CD8-positive, alpha-beta memory T cell (primary cell): ENCODE measurements at regions of chr1 and their contacts with region 1.

Region 1: GRCh38 chr1:159891275-159892157 is 8.4 kb downstream of the CFAP45 start:
- DNase-seq: peak; percentile 66 to 88 (median 73)
- H3K4me3 ChIP-seq: no peak overlapping the region
- H3K4me3 Mint-ChIP-seq: peak overlapping the region in 1 of 7 donors; percentile 67
- H3K27ac ChIP-seq: no peak overlapping the region
- H3K27ac Mint-ChIP-seq: peak overlapping the region in 4 of 8 donors; percentile 37 to 74 (median 50)
- H3K4me1 ChIP-seq: peaks cover 17% of the 10 kb centered on the region
- H3K4me1 Mint-ChIP-seq: peaks cover 24 to 26% (median 25%) of the 10 kb centered on the region in 3 donors
- H3K27me3 ChIP-seq: no peaks in the 10 kb centered on the region
- H3K27me3 Mint-ChIP-seq: no peaks in the 10 kb centered on the region

Region 2: GRCh38 chr1:159780583-159781582 is 110.6 kb before region 1 on chr1 and contains the start of gene DUSP23:
- CTCF ChIA-PET with region 1: interaction called, 66 read pairs
- POLR2A ChIA-PET with region 1: no interaction called
- DNase-seq: peak; percentile 94 to 96 (median 96)
- H3K4me3 ChIP-seq: peak within 1 kb of the TSS; percentile 63
- H3K4me3 Mint-ChIP-seq: peak within 1 kb of the TSS; percentile 81 to 95 (median 89)
- H3K27ac ChIP-seq: peak within 1 kb of the TSS; percentile 58
- H3K27ac Mint-ChIP-seq: peak within 1 kb of the TSS; percentile 8 to 92 (median 88)
- H3K4me1 ChIP-seq: peaks cover 9% of the 10 kb centered on the region
- H3K4me1 Mint-ChIP-seq: peaks cover 39 to 57% (median 43%) of the 10 kb centered on the region in 3 donors
- H3K27me3 ChIP-seq: no peaks in the 10 kb centered on the region
- H3K27me3 Mint-ChIP-seq: peaks cover 0 to 1% of the 10 kb centered on the region in 2 donors
- total RNA-seq, gene DUSP23: 35.5 to 38.1 TPM

Region 3: GRCh38 chr1:159790237-159790917 is 101.1 kb before region 1 on chr1:
- CTCF ChIA-PET with region 1: interaction called, 316 read pairs
- POLR2A ChIA-PET with region 1: no interaction called
- DNase-seq: peak in 1 of 5 donors; percentile 20
- H3K4me3 ChIP-seq: no peak overlapping the region
- H3K4me3 Mint-ChIP-seq: no peak overlapping the region
- H3K27ac ChIP-seq: no peak overlapping the region
- H3K27ac Mint-ChIP-seq: no peak overlapping the region
- H3K4me1 ChIP-seq: no peaks in the 10 kb centered on the region
- H3K4me1 Mint-ChIP-seq: peaks cover 0 to 4% (median 0%) of the 10 kb centered on the region in 3 donors
- H3K27me3 ChIP-seq: no peaks in the 10 kb centered on the region
- H3K27me3 Mint-ChIP-seq: peaks cover 5 to 9% of the 10 kb centered on the region in 2 donors

Region 4: DNA sequence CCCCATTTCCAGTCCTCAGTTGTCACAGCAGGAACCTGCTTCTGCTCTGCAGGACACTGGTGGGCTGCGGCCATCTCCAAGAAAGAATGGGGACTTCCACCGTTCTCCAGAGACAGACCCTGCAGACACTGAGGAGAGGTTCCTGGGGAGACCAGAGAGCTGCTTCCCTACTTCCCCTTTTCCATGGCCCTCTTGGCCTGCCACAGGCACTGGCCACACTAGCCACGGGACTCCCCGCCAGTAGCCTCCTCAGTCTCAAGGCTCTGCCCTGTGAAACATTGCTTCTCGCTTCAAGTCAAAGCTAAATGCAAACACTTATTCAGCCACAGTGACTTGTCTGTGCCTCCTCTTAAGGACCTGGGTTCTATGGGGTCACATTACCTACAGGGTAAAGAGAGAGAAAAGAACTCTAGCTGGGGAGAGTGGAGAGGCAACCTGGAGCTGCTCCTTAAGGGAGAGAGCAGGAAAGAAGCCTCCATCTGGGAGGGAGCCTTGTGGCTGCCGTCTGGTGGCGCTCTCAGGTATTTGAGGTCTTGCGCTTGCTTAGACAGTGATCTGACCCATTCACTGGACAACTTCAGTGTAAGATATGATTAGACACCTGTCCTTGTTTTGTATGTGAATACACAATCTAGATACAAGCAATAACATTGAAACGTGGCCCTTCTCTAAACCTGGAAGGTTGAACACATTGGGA is 70.2 kb before region 1 on chr1:
- CTCF ChIA-PET with region 1: interaction called, 10 read pairs
- POLR2A ChIA-PET with region 1: interaction called, 3 read pairs
- DNase-seq: no peak
- H3K4me3 ChIP-seq: no peak overlapping the region
- H3K4me3 Mint-ChIP-seq: peak overlapping the region in 1 of 7 donors; percentile 10
- H3K27ac ChIP-seq: no peak overlapping the region
- H3K27ac Mint-ChIP-seq: peak overlapping the region in 2 of 8 donors; percentile 14 to 38
- H3K4me1 ChIP-seq: peaks cover 29% of the 10 kb centered on the region
- H3K4me1 Mint-ChIP-seq: peaks cover 45 to 69% (median 65%) of the 10 kb centered on the region in 3 donors
- H3K27me3 ChIP-seq: no peaks in the 10 kb centered on the region
- H3K27me3 Mint-ChIP-seq: peaks cover 0 to 2% of the 10 kb centered on the region in 2 donors

Region 5: DNA sequence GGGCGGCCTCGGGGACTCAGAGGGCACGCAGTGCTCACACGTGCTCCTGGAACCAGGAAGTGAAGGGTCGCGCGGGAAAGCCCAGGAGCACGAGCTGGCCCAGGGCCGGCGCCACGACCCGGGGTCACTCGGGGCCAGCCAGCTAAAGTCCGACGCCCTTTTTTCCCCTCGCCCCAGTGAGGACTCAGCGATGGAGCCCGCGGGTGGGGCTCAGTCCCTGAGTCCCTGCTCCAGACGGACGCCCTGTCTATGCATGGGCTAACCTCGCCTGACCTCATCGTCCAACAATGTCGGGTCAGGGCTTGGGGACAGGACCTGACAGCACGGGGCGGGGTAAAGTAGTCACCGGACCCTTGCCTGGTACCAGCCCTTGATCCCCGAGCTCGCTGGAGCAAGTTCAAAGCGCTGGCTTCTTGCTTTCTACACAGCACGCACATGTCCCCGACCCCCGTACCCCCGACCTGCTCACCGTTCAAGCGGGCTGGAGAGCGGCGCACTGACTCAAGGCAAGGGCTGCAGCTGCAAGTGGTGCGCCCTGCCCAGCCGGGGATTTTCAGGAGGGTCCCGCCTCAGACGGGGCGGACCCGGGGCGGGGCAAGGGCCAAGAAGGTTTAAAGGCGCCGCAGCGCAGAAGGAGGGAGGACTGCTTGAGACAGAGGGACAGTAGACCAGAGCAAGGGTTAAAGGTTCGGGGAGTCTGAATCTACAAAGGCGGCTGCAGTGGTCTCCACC is 33.6 kb after region 1 on chr1 and contains the start of gene TAGLN2:
- CTCF ChIA-PET with region 1: interaction called, 45 read pairs
- POLR2A ChIA-PET with region 1: interaction called, 3 read pairs
- DNase-seq: peak; percentile 79 to 93 (median 87)
- H3K4me3 ChIP-seq: peak within 1 kb of the TSS; percentile 100
- H3K4me3 Mint-ChIP-seq: peak within 1 kb of the TSS; percentile 89 to 99 (median 96)
- H3K27ac ChIP-seq: peak within 1 kb of the TSS; percentile 100
- H3K27ac Mint-ChIP-seq: peak within 1 kb of the TSS; percentile 97 to 100 (median 100)
- H3K4me1 ChIP-seq: peaks cover 44% of the 10 kb centered on the region
- H3K4me1 Mint-ChIP-seq: peaks cover 50 to 61% (median 52%) of the 10 kb centered on the region in 3 donors
- H3K27me3 ChIP-seq: no peaks in the 10 kb centered on the region
- H3K27me3 Mint-ChIP-seq: peaks cover 0 to 20% of the 10 kb centered on the region in 2 donors
- total RNA-seq, gene TAGLN2: 566 to 578 TPM

Region 6: DNA sequence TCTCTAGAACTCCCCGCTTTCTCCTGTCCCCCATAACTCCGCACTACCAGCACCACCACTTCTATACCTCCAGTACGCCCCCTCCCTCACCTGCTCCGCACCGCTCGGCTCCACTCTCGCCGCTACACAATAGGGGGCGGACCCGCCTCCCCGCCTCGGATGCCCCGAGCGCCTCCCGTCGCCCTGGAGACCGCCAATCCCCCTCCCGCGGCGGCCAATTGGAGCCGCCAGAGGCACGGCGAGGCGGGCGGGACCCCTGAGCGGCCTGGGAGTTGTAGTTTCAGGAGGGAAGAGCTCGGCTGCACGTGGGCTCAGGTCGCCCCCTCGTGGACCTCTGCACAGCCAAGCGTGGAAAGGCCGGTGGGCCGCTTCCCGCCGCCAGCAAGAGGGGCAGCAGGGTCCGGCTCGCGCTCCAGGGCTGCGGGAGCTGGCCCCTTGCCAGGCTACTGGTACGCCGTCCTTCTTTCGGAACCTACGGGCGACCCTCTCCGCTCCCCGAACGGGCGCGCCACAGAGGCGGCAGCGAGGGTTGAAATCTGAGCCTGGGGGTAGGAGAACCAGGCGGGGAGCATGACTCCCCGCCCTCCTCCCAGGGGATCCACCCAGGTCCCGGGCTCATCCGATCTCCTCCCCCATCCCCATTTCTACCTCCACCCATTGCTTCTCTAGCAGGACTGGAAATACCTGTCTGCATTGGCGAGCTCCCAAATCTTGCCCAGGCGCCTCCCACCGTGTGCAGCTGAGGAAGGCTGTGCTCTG is 54.1 kb after region 1 on chr1 and contains the start of gene IGSF9:
- CTCF ChIA-PET with region 1: interaction called, 20 read pairs
- POLR2A ChIA-PET with region 1: no interaction called
- DNase-seq: peak; percentile 63 to 90 (median 78)
- H3K4me3 ChIP-seq: peak within 1 kb of the TSS; percentile 39
- H3K4me3 Mint-ChIP-seq: peak within 1 kb of the TSS; percentile 29 to 85 (median 70)
- H3K27ac ChIP-seq: no peak within 1 kb of the TSS
- H3K27ac Mint-ChIP-seq: peak within 1 kb of the TSS in 2 of 8 donors; percentile 5 to 58
- H3K4me1 ChIP-seq: peaks cover 6% of the 10 kb centered on the region
- H3K4me1 Mint-ChIP-seq: peaks cover 8 to 10% (median 10%) of the 10 kb centered on the region in 3 donors
- H3K27me3 ChIP-seq: peaks cover 25% of the 10 kb centered on the region
- H3K27me3 Mint-ChIP-seq: peaks cover 18 to 34% of the 10 kb centered on the region in 2 donors
- total RNA-seq, gene IGSF9: 0.04 to 0.11 TPM